HCT116 (cell line): ENCODE measurements at regions of chr12 and their contacts with region 1.

Region 1: DNA sequence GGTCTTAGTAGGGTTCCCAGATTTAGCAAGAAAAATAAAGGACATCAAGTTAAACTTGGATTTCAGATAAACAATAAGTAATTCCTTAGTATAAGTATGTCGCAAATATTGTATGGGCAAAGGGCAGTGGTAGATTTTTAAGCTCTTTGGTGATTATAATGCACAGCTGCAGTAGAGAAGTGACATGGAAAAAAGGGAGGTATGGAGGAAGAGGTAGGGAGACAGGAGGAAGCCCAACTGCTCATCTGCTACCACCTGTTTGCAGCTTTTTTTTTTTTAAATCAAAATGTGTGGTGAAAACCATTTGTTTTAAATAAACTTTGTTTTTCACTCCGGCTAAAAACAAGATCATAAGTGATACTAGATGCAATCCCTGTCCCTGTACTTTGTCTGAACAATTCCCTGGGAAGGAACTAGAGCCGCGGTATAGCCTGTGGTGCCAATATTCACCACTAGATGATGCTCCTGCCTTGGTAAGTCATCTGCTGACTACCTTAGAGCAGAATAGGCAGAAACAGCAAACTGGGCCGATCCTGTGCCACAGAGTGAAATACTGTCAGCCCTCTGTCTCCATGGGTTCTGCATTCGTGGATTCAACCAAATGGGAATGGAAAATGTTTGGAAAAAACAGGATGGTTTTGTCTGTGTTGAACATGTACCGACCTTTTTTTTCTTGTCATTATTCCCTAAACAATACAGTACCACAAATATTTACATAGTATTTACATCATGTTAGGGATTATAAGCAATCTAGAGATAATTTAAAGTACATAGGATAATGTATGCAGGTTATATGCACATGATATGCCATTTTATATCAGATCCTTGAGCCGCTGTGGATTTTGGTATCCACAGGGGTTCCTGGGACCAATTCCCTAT is 62.4 kb upstream of the PLBD1 start:
- DNase-seq: peak; percentile 67
- ATAC-seq: peak; percentile 100
- H3K4me3 ChIP-seq: no peak overlapping the region
- H3K27ac ChIP-seq: no peak overlapping the region
- H3K4me1 ChIP-seq: no peaks in the 10 kb centered on the region
- H3K27me3 ChIP-seq: no peaks in the 10 kb centered on the region
- CTCF ChIP-seq: peak; percentile 84 to 99 (median 95)
- POLR2A ChIP-seq: no peak
- RAD21 ChIP-seq: peak; percentile 93

Region 2: DNA sequence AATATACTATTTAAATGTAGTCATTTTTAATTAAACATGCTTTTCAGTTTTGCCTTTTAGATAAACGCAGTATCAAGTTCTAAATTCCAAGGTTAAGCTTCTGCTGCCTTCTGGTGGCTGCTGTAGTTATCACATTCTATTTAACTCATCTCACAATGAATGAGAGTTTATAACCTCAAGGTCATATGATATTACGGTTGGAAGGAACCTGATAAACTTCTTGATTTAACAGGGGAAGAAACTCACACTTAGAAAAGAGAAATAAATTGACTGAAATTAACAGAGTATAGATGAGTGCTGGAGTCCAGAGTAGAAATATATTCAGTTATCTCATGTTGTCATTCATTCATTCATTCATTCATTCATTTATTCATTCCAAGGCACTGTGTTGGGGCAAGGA is 34.4 kb after region 1 on chr12:
- CTCF ChIA-PET with region 1: interaction called, 4 read pairs
- POLR2A ChIA-PET with region 1: no interaction called
- RAD21 ChIA-PET with region 1: no interaction called
- intact Hi-C with region 1: loop called (anchors 1 kb)
- DNase-seq: peak; percentile 37
- ATAC-seq: peak; percentile 75
- H3K4me3 ChIP-seq: no peak overlapping the region
- H3K27ac ChIP-seq: no peak overlapping the region
- H3K4me1 ChIP-seq: no peaks in the 10 kb centered on the region
- H3K27me3 ChIP-seq: no peaks in the 10 kb centered on the region
- CTCF ChIP-seq: peak; percentile 42 to 78 (median 68); a peak in 5 of 6 replicates
- POLR2A ChIP-seq: no peak
- RAD21 ChIP-seq: peak; percentile 84

Region 3: DNA sequence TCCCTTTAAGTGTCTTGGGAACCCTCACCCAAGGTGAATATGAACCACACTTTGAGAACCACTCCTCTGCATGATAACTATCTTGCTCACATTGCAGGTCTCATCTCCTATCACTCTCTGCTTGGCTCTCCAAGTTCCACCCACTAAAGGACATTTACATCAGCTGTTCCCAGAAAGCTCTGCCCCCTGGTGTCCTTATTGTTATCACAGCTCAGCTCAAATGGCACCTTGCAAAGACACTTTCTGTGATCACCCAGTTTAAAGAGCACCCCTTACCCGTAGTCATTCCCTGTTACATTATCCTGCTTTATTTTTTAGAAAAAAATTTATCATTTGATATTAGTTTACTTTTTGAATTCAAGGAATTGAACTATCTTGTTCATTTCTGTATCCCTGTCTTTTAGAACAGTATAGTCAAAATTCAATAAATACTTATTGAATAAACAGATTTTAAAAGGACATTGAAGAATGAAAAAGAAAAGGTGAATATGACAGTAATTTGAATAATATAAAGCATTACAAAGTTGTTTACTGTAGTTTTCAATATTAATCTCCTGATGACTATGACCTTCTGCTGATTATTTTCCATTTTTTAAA is 86.9 kb after region 1 on chr12:
- CTCF ChIA-PET with region 1: no interaction called
- POLR2A ChIA-PET with region 1: no interaction called
- RAD21 ChIA-PET with region 1: no interaction called
- intact Hi-C with region 1: loop called (anchors 2 kb)
- DNase-seq: peak; percentile 13
- ATAC-seq: peak; percentile 85
- H3K4me3 ChIP-seq: no peak overlapping the region
- H3K27ac ChIP-seq: no peak overlapping the region
- H3K4me1 ChIP-seq: no peaks in the 10 kb centered on the region
- H3K27me3 ChIP-seq: no peaks in the 10 kb centered on the region
- CTCF ChIP-seq: peak; percentile 24 to 50 (median 43); a peak in 3 of 6 replicates
- POLR2A ChIP-seq: no peak
- RAD21 ChIP-seq: peak; percentile 35; the same call in 1 of the 2 replicates

Region 4: DNA sequence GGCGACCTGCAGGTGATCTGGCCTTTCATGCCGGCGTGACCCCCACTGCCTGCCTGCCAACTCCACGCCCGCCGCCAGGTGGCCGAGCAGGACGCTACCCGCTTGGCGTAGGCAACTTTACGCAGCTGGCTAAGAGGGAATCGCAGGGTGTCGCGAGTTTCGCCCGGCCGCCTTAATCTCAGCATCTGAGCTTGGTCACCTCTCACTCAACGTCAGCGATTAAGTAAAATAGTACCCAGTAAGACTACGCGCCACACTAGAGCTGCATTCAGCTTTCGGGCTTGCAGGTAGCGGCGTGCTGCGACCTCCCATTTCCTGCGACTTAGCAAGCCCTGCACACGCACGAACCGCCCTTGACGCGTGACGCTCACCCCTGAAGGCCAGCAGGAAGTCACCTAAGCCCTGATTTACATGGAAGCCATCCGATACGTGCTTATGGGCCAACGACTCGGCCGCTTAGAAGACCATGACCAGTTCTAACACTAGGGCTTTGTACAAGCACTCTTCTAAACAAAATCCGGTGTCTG is 140.0 kb after region 1 on chr12:
- CTCF ChIA-PET with region 1: no interaction called
- POLR2A ChIA-PET with region 1: no interaction called
- RAD21 ChIA-PET with region 1: no interaction called
- intact Hi-C with region 1: loop called (anchors 5 kb)
- DNase-seq: peak; percentile 56
- ATAC-seq: peak; percentile 59
- H3K4me3 ChIP-seq: peak overlapping the region; percentile 71 to 72
- H3K27ac ChIP-seq: peak overlapping the region; percentile 82
- H3K4me1 ChIP-seq: peaks cover 0 to 19% of the 10 kb centered on the region in 2 experiments; a peak in 3 of 4 replicates
- H3K27me3 ChIP-seq: no peaks in the 10 kb centered on the region
- CTCF ChIP-seq: peak; percentile 14 to 59 (median 51); a peak in 4 of 6 replicates
- POLR2A ChIP-seq: peak; percentile 19
- RAD21 ChIP-seq: 0 out of 2 replicates have a peak, but pooled peaks have one; percentile 34

Region 5: GRCh38 chr12:14845350-14845750 is 215.3 kb after region 1 on chr12:
- CTCF ChIA-PET with region 1: no interaction called
- POLR2A ChIA-PET with region 1: no interaction called
- RAD21 ChIA-PET with region 1: no interaction called
- intact Hi-C with region 1: loop called (anchors 2 kb)
- DNase-seq: peak; percentile 37
- ATAC-seq: peak; percentile 87
- H3K4me3 ChIP-seq: no peak overlapping the region
- H3K27ac ChIP-seq: no peak overlapping the region
- H3K4me1 ChIP-seq: peaks cover 0 to 10% of the 10 kb centered on the region in 2 experiments; a peak in 2 of 4 replicates
- H3K27me3 ChIP-seq: no peaks in the 10 kb centered on the region
- CTCF ChIP-seq: peak; percentile 67 to 86 (median 84)
- POLR2A ChIP-seq: no peak
- RAD21 ChIP-seq: peak; percentile 87